ENCODE measurements at regions of chr17 and their contacts with region 1.

Region 1: DNA sequence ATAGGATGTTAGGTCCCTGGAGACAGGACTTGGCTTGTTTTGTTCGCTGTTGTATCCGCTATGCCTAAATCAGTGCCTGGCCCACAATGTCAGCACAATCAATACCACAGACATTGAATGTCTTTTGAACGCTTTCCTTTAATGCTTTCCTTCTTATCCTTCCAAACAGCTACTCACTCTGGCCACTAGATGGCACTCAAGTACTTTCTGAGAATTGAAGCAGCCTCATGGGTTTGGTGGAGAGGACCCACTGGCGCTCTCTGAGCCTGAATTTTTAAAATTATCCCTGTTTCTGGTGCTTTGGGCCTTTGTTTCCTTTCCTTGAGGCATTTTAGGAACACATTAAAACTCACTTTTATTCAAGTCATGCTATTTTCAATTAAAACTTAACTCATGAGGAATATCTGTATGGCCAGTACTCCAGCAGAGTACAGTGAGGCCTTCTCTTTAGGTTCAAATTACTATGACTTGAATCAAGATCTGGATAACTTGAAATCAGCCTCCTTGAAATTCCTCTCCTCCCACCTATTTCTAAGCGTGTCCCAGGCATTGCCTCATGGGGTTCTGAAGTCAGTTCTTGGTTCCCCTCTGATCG is 3.2 kb upstream of the NLRP1 start:
- DNase-seq: peak in 29 of 35 experiments; percentile 21 to 90 (median 45)
- ATAC-seq: no peak
- H3K4me3 ChIP-seq: no peak overlapping the region
- H3K4me3 Mint-ChIP-seq: peak overlapping the region; percentile 1 to 70 (median 44)
- H3K27ac ChIP-seq: no peak overlapping the region
- H3K27ac Mint-ChIP-seq: peak overlapping the region; percentile 95 to 98
- H3K4me1 ChIP-seq: peaks cover 20 to 51% of the 10 kb centered on the region in 2 experiments
- H3K4me1 Mint-ChIP-seq: peaks cover 38 to 44% (median 44%) of the 10 kb centered on the region in 3 donors
- H3K27me3 ChIP-seq: peaks cover 0 to 6% of the 10 kb centered on the region in 2 experiments
- H3K27me3 Mint-ChIP-seq: no peaks in the 10 kb centered on the region

Region 2: GRCh38 chr17:5552841-5553240 is 34.7 kb before region 1 on chr17:
- CTCF ChIA-PET with region 1: no interaction called
- POLR2A ChIA-PET with region 1: no interaction called
- DNase-seq: no peak
- ATAC-seq: no peak
- H3K4me3 ChIP-seq: no peak overlapping the region
- H3K4me3 Mint-ChIP-seq: no peak overlapping the region
- H3K27ac ChIP-seq: no peak overlapping the region
- H3K27ac Mint-ChIP-seq: peak overlapping the region; percentile 8 to 40
- H3K4me1 ChIP-seq: no peaks in the 10 kb centered on the region
- H3K4me1 Mint-ChIP-seq: peaks cover 11 to 33% (median 23%) of the 10 kb centered on the region in 3 donors
- H3K27me3 ChIP-seq: no peaks in the 10 kb centered on the region
- H3K27me3 Mint-ChIP-seq: no peaks in the 10 kb centered on the region

Region 3: GRCh38 chr17:5706577-5707216 is 119.2 kb after region 1 on chr17:
- CTCF ChIA-PET with region 1: interaction called in 1 of 2 experiments, 15 read pairs
- POLR2A ChIA-PET with region 1: no interaction called
- DNase-seq: peak in 34 of 35 experiments; percentile 6 to 72 (median 45)
- ATAC-seq: peak in 2 of 4 experiments; percentile 43 to 46
- H3K4me3 ChIP-seq: no peak overlapping the region
- H3K4me3 Mint-ChIP-seq: no peak overlapping the region
- H3K27ac ChIP-seq: no peak overlapping the region
- H3K27ac Mint-ChIP-seq: no peak overlapping the region
- H3K4me1 ChIP-seq: no peaks in the 10 kb centered on the region
- H3K4me1 Mint-ChIP-seq: no peaks in the 10 kb centered on the region
- H3K27me3 ChIP-seq: peaks cover 0 to 40% of the 10 kb centered on the region in 2 experiments
- H3K27me3 Mint-ChIP-seq: peaks cover 28 to 35% of the 10 kb centered on the region in 2 donors